Activated naive CD4-positive, alpha-beta T cell treated with anti-CD3 and anti-CD28 coated beads for 36 hours (primary cell): ENCODE measurements at regions of chrX and their contacts with region 1.

Region 1: GRCh38 chrX:84729809-84730208 is 227.6 kb upstream of the HDX start:
- DNase-seq: peak; percentile 4
- H3K4me3 Mint-ChIP-seq: no peak overlapping the region
- H3K27ac Mint-ChIP-seq: no peak overlapping the region
- H3K4me1 Mint-ChIP-seq: no peaks in the 10 kb centered on the region
- H3K27me3 Mint-ChIP-seq: no peaks in the 10 kb centered on the region

Region 2: DNA sequence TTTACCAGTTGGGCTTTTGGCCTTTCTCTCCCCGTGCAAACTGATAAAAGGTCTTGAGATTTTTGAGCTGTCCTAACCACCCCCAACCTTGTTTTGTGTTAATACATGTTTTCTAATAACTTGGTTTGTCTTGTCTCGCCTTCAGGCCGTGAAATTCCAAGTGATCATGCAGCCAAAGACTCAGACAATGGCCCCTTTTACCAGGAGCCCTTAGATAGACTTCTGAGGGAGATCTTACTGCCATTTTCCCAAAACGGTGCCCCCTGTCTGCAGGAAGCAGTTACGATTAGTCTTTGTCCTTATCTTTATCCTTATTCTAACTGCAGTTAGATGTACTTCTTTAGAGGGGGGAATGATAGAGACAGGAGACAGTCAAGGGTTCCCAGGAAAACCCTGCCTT is 17.7 kb after region 1 on chrX:
- CTCF ChIA-PET with region 1: no interaction called
- intact Hi-C with region 1: no loop called
- DNase-seq: no peak
- H3K4me3 Mint-ChIP-seq: no peak overlapping the region
- H3K27ac Mint-ChIP-seq: no peak overlapping the region
- H3K4me1 Mint-ChIP-seq: no peaks in the 10 kb centered on the region
- H3K27me3 Mint-ChIP-seq: no peaks in the 10 kb centered on the region

Region 3: DNA sequence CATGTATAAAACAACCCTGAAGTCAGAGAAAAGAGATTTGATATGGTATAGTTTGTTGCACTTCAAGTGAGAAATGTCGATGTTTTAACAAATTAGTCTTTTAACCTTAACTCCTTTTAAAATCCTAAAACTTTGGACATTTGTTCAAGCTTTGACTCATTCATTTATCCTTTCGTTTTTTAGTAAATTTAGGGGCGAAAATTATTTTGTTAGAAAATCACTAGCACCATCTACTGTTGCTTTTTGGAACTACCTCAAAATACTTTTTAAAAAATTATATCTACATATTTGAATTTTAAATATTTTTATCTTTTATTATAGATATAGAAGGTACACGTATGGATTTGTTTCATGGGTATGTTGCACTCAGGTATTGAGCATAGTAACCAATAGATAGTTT is 814.8 kb after region 1 on chrX:
- CTCF ChIA-PET with region 1: no interaction called
- intact Hi-C with region 1: loop called (anchors 2 kb)
- DNase-seq: no peak
- H3K4me3 Mint-ChIP-seq: no peak overlapping the region
- H3K27ac Mint-ChIP-seq: no peak overlapping the region
- H3K4me1 Mint-ChIP-seq: no peaks in the 10 kb centered on the region
- H3K27me3 Mint-ChIP-seq: no peaks in the 10 kb centered on the region